Activated naive CD4-positive, alpha-beta T cell treated with anti-CD3 and anti-CD28 coated beads for 36 hours (primary cell): ENCODE measurements at regions of chr1 and their contacts with region 1.

Region 1: GRCh38 chr1:11645670-11646265 is 8.5 kb downstream of the FBXO2 start:
- DNase-seq: peak; percentile 91
- H3K4me3 Mint-ChIP-seq: no peak overlapping the region
- H3K27ac Mint-ChIP-seq: no peak overlapping the region
- H3K4me1 Mint-ChIP-seq: peaks cover 10% of the 10 kb centered on the region
- H3K27me3 Mint-ChIP-seq: no peaks in the 10 kb centered on the region

Region 2: GRCh38 chr1:11248155-11248554 is 397.6 kb before region 1 on chr1:
- CTCF ChIA-PET with region 1: interaction called, 31 read pairs
- intact Hi-C with region 1: no loop called
- DNase-seq: no peak
- H3K4me3 Mint-ChIP-seq: no peak overlapping the region
- H3K27ac Mint-ChIP-seq: no peak overlapping the region
- H3K4me1 Mint-ChIP-seq: no peaks in the 10 kb centered on the region
- H3K27me3 Mint-ChIP-seq: no peaks in the 10 kb centered on the region

Region 3: DNA sequence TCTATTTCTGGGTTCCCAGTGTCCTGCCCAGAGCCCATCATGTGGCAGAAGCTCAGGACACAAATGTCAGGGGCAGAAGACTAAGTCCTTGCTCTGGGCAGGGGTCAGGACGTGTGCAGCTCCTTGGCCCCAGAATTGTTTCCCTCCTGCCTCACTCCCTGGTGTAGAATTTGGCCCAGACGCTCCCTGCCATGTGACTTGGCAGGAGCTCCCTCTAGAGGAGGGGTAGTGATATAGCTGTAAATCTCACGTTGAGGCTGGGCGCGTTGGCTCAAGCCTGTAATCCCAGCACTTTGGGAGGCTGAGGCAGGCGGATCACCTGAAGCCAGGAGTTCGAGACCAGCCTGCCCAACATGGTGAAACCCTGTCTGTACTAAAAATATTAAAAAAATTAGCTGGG is 281.6 kb before region 1 on chr1:
- CTCF ChIA-PET with region 1: interaction called, 3 read pairs
- intact Hi-C with region 1: loop called (anchors 1 kb)
- DNase-seq: peak; percentile 20
- H3K4me3 Mint-ChIP-seq: no peak overlapping the region
- H3K27ac Mint-ChIP-seq: no peak overlapping the region
- H3K4me1 Mint-ChIP-seq: no peaks in the 10 kb centered on the region
- H3K27me3 Mint-ChIP-seq: no peaks in the 10 kb centered on the region

Region 4: DNA sequence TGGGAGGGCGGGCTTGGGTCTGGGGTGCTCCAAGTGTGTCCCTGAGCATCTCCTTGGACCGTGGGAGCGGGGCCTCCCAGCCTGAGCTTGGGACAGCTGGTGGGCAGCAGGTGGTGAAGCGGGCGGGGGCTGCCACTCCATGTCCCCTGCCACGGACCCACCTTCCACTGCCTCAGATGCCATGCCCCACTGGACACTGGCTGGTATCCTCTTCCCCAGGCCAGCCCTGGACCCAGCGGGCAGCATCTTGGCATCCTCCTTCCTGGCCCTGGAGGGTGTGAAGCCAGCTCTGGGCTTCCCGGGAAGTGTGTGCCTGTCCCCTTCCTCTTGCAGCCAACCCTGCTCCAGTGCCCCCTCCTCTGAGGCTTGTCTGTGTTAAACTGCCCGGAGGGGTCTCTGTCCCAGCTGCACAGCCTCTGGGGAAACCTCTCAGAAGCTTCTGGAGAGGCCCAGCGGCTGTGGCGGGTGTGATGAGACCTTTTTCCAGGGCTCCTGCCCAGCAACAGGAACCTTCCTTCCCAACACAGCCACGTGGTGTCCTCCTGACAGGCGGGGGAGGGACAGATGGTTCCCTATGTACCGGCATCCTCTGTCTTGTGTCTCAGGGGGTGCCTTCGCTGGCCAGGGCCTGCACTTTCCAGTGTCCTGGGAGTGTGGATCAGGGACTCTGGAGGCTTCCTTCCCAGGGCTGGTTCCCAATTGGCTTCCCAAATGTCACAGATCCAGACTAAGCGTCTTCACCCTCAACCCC is 248.4 kb before region 1 on chr1:
- CTCF ChIA-PET with region 1: no interaction called
- intact Hi-C with region 1: no loop called
- DNase-seq: no peak
- H3K4me3 Mint-ChIP-seq: no peak overlapping the region
- H3K27ac Mint-ChIP-seq: no peak overlapping the region
- H3K4me1 Mint-ChIP-seq: no peaks in the 10 kb centered on the region
- H3K27me3 Mint-ChIP-seq: no peaks in the 10 kb centered on the region

Region 5: DNA sequence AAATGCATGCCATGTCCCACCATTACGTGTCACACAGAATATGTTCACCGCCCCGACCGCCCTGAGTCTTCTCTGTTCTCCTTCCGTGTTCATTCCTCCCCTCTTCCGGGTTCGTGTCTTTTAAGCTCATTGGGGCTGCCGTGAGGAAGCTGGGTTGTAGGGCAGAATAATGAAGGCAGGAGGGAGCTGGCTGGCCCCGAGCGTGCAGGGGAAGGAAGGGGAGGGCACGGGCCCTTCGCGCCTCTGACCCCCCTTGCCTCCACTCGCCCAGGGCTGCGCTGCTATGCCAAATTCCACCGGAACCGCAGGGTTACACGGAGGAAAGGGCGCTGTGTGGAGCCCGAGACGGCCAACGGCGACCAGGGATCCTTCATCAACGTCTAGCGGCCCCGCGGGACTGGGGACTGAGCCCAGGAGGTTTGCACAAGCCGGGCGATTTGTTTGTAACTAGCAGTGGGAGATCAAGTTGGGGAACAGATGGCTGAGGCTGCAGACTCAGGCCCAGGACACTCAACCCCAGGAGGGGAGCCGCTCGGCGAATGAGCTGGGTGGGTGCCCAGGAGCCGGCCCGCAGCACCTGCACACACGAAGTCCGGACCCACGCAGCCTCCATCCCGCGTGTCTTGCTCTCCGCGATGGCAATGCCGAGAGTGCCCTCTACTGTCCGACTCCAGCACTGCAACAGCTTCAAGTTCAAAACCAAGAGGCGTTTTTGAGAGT is 73.7 kb after region 1 on chr1:
- CTCF ChIA-PET with region 1: interaction called, 18 read pairs
- intact Hi-C with region 1: loop called (anchors 1 kb)
- DNase-seq: peak; percentile 93
- H3K4me3 Mint-ChIP-seq: peak overlapping the region; percentile 80
- H3K27ac Mint-ChIP-seq: peak overlapping the region; percentile 80
- H3K4me1 Mint-ChIP-seq: peaks cover 14% of the 10 kb centered on the region
- H3K27me3 Mint-ChIP-seq: no peaks in the 10 kb centered on the region

Region 6: DNA sequence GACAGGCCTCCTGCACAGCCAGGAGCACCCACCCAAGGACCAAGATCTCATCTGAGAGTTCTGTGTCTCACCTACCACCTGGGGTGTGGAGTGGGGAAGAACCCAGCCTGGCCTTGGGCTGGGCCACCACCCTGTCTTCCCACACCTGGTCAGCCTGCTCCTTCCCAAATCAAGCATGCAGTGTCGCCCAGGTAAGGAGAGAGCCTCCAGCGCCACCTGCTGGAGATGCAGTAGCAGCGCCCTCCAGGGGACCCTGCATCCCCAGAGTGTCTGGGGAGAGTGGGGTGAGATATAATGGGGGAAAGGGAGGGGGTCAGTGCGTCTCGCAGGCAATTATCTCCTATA is 248.1 kb after region 1 on chr1:
- CTCF ChIA-PET with region 1: no interaction called
- intact Hi-C with region 1: loop called (anchors 5 kb)
- DNase-seq: peak; percentile 82
- H3K4me3 Mint-ChIP-seq: no peak overlapping the region
- H3K27ac Mint-ChIP-seq: no peak overlapping the region
- H3K4me1 Mint-ChIP-seq: no peaks in the 10 kb centered on the region
- H3K27me3 Mint-ChIP-seq: peaks cover 25% of the 10 kb centered on the region

Region 7: DNA sequence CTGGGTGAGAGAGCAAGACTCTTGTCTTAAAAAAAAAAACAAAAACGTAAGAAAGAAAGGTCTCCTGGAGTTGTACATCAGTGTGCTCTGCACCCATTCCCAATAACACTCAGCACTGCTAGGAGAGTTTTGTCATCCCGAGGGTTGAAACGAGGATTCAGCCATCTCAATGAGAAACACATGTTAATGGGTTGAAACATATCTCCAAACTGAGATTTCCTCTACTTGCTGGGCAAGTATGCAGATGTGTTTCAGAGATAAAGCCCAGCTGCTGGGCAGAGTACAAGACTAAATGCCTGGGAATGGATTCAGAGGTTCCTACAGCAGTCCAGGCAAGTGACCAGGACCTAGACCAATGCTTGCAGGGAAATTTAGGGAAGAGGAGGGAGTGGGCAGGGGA is 331.9 kb after region 1 on chr1:
- CTCF ChIA-PET with region 1: no interaction called
- intact Hi-C with region 1: no loop called
- DNase-seq: no peak
- H3K4me3 Mint-ChIP-seq: no peak overlapping the region
- H3K27ac Mint-ChIP-seq: no peak overlapping the region
- H3K4me1 Mint-ChIP-seq: peaks cover 31% of the 10 kb centered on the region
- H3K27me3 Mint-ChIP-seq: no peaks in the 10 kb centered on the region